ENCODE measurements at regions of chr6 and their contacts with region 1.

Region 1: DNA sequence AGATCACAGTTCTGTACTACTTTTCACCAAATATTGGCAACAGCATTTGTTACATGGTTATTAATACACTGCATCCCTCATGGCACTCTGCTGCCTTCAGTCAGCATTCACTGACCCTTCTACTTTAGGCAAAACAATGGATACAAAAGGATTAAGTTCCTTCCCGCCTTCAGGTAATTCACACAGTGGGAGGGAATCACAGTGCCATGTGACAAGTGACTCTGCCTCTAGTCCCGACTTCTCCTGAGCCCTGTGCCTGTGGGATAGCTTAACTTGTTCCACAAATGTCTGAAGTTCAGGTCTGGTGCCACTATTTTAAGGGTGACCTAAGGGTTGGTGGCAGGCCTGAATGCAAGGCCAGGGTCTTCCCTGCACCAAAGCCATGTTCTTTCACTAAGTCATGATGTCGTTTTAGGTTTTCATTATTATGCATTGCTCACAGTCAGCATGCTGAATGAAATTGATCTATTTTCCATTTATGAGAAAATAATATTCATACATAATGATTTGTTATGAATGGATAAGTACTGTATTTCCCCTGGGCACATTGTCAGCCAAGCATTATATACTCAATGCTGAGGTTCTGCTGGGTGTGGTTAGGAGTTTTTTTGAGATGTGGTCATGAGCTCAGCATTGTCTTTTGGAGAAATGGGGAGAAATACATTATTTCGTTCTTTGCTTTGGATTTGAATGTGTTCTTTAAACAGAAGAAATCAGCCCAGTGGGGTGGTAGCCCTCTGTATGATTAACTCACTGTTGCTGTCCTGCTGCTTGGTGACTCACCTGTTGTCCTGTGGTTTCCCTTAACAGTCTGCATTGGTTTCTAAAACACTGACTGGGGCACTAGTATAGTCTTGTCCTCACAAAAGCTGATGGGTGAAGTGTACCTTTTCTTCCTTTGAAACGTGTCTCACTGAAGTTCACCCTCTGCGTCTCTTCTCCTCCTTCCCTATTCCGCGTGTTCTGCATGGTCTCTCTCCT is 66.4 kb downstream of the AFDN start:
- DNase-seq: no peak
- CTCF ChIP-seq: no peak

Region 2: DNA sequence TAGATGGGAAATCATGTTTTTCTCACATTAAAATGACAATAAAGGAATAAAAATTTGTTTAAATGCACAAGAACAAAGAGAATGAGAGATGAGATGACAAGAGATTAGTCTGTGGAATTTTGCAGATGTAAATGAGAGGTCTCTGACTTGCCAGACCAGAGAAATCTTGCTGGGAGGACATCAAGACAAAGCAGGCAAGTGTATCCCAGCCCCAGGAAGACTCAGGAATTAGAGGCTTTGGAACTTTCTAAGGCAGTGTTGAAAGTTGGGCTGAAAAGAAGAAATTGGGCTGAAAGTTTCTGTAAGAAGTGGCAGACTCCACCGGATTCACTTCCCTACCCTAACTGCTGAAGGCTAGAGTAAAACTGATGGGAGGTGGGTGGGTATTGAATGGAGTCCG is 11.8 kb before region 1 on chr6:
- CTCF ChIA-PET with region 1: interaction called, 15 read pairs
- POLR2A ChIA-PET with region 1: no interaction called
- DNase-seq: no peak
- CTCF ChIP-seq: no peak

Region 3: GRCh38 chr6:167920165-167920564 is 27.0 kb after region 1 on chr6:
- CTCF ChIA-PET with region 1: no interaction called
- POLR2A ChIA-PET with region 1: no interaction called
- DNase-seq: no peak
- CTCF ChIP-seq: no peak

Measured in GM10248 (cell line).